Sciatic nerve (tissue), 2 donors: ENCODE measurements at regions of chr10 and their contacts with region 1.

Region 1: DNA sequence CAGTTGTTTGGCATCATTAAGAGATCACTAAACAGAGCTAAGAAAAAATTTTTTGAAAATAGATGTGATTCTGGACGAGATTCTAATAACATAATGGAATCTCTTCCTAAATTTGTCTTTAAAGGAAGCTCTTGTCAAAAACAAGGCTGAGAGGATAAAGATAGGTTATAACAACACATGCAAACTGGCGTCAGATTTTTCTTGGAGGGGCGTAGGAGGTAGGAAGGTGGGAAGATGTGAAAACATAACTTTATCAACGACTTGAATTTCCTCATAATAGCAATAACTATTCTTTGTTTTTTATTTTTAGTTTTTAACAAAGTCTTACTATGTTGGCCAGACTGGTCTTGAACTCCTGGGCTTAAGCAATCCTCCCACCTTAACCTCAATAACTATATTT is 31.8 kb upstream of the JCAD start:
- DNase-seq: no peak
- ATAC-seq: no peak

Region 2: GRCh38 chr10:30017556-30017955 is 73.6 kb before region 1 on chr10:
- intact Hi-C with region 1: loop called (anchors 2 kb)
- DNase-seq: peak; percentile 19
- ATAC-seq: peak; percentile 45

Region 3: DNA sequence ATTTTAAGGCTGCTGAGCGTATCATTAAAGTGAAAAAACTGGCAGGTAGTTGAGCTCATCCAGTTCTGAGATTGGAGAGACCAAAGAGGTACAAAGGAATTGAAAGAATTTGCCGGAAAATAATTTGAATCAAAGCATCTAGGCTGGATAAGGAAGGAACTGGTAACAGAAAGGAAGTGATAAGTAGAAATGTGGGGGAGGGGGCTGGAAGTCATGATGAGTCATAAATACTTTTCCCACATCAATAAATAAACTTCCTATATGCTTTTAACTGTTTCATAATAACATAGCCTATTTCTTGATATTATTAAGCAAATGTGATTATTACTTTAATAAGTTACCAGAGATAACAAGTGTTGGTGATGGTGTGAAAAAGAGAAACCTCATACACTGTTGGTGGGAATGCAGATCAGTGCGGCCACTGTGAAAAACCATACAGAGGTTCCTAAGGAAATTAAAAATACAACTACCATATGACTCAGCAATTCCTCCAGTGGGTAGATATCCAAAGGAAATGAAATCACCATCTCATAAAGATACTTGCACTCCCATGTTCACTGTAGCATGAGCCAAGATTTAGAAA is 913.6 kb after region 1 on chr10:
- intact Hi-C with region 1: no loop called
- DNase-seq: no peak
- ATAC-seq: no peak